PC-3 (cell line): ENCODE measurements at regions of chr2 and their contacts with region 1.

Region 1: GRCh38 chr2:109510136-109511028 is 103.4 kb downstream of the SEPTIN10 start:
- DNase-seq: peak; percentile 88
- ATAC-seq: peak; percentile 76
- H3K4me3 ChIP-seq: no peak overlapping the region
- H3K27ac ChIP-seq: no peak overlapping the region
- H3K4me1 ChIP-seq: peaks cover 10% of the 10 kb centered on the region
- H3K27me3 ChIP-seq: no peaks in the 10 kb centered on the region
- CTCF ChIP-seq: peak; percentile 94

Region 2: DNA sequence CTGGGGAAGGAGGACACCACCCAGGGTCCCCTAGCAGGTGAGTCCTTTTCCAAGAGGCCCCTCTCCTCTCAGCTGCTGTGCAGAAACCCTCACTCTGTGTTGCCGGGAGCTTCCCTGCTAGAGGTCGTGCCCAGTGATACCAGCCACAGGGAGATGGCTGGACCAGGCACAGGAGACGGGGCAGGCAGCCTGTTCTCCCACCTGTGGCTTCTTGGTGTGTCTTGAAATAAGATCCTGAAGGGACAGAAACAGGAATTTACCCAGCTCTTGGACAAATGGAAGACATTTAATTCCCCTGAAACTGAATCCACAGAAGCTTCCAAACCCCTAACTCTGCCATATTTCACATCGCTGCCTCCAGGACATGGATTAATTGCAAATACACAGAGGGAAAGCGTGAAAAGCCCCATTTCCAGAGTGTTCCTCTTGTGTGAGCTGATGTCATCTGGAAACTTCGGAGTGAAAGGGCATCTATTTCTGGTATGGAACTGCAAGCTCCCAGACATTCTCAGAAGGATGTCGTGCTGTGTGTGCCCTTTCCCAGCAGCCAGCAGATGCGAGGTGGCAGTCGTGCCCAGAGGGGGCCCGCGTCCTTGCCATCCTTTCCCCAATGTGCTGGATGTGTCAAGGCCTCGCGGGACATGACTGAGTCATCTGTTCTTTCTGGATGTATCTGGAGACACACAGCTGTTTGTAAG is 74.3 kb before region 1 on chr2:
- CTCF ChIA-PET with region 1: no interaction called
- POLR2A ChIA-PET with region 1: no interaction called
- intact Hi-C with region 1: loop called (anchors 2 kb)
- DNase-seq: no peak
- ATAC-seq: no peak
- H3K4me3 ChIP-seq: no peak overlapping the region
- H3K27ac ChIP-seq: no peak overlapping the region
- H3K4me1 ChIP-seq: no peaks in the 10 kb centered on the region
- H3K27me3 ChIP-seq: no peaks in the 10 kb centered on the region
- CTCF ChIP-seq: no peak

Region 3: GRCh38 chr2:109594246-109594885 is 84.0 kb after region 1 on chr2:
- CTCF ChIA-PET with region 1: no interaction called
- POLR2A ChIA-PET with region 1: no interaction called
- intact Hi-C with region 1: no loop called
- DNase-seq: no peak
- ATAC-seq: no peak
- H3K4me3 ChIP-seq: no peak overlapping the region
- H3K27ac ChIP-seq: no peak overlapping the region
- H3K4me1 ChIP-seq: no peaks in the 10 kb centered on the region
- H3K27me3 ChIP-seq: no peaks in the 10 kb centered on the region
- CTCF ChIP-seq: no peak

Region 4: GRCh38 chr2:110903548-110903947 is 1393.2 kb after region 1 on chr2:
- CTCF ChIA-PET with region 1: no interaction called
- POLR2A ChIA-PET with region 1: no interaction called
- intact Hi-C with region 1: no loop called
- DNase-seq: no peak
- ATAC-seq: no peak
- H3K4me3 ChIP-seq: no peak overlapping the region
- H3K27ac ChIP-seq: no peak overlapping the region
- H3K4me1 ChIP-seq: no peaks in the 10 kb centered on the region
- H3K27me3 ChIP-seq: no peaks in the 10 kb centered on the region
- CTCF ChIP-seq: no peak